ENCODE measurements at regions of chr7 and their contacts with region 1.

Region 1: GRCh38 chr7:55523366-55523765 is 48.9 kb downstream of the VOPP1 start:
- DNase-seq: no peak
- H3K4me3 ChIP-seq: no peak overlapping the region
- H3K27ac ChIP-seq: no peak overlapping the region
- H3K4me1 ChIP-seq: no peaks in the 10 kb centered on the region
- H3K27me3 ChIP-seq: no peaks in the 10 kb centered on the region
- CTCF ChIP-seq: no peak

Region 2: DNA sequence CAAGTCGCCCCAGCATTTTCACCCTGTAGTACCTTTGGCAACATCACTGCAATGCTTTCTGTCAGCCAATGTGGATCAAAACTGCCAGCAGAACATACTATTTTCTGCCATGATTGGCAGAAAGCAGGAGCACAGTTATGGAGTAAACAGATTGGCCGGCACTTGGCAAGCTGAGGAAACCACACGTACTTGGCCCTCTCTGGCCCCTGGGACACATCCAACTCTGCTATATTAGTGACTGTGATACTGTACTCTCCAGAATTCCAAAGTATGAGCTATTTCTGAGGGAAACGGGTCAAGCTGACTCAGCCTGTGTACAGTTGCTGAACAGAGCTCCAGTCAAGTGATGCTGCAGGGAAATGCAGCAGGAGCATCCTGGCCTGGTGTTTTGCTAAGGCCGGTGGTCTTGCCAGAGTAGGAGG is 198.0 kb before region 1 on chr7:
- CTCF ChIA-PET with region 1: no interaction called
- POLR2A ChIA-PET with region 1: no interaction called
- intact Hi-C with region 1: no loop called
- DNase-seq: peak in 1 of 2 experiments; percentile 49
- H3K4me3 ChIP-seq: no peak overlapping the region
- H3K27ac ChIP-seq: no peak overlapping the region
- H3K4me1 ChIP-seq: no peaks in the 10 kb centered on the region
- H3K27me3 ChIP-seq: peaks cover 81% of the 10 kb centered on the region
- CTCF ChIP-seq: no peak

Region 3: GRCh38 chr7:55588976-55589604 is 65.7 kb after region 1 on chr7:
- CTCF ChIA-PET with region 1: no interaction called
- POLR2A ChIA-PET with region 1: no interaction called
- intact Hi-C with region 1: no loop called
- DNase-seq: no peak
- H3K4me3 ChIP-seq: no peak overlapping the region
- H3K27ac ChIP-seq: no peak overlapping the region
- H3K4me1 ChIP-seq: peaks cover 4% of the 10 kb centered on the region
- H3K27me3 ChIP-seq: no peaks in the 10 kb centered on the region
- CTCF ChIP-seq: no peak

Region 4: DNA sequence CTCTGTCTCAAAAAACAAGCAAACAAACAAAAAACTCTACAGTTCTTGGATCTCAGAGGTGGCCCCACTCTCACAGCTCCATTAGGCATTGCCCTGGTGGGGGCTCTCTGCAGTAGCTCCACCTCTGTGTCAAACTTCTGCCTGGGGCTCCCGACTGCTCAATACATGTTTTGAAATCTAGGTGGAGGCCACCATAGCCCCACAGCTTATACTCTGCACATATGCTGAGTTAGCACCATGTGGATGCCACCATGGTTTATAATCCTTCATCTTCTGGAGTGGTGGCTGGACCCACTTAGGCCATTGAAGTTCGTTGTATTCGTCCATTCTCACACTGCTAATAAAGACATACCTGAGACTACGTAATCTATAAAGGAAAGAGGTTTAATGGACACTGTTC is 260.8 kb after region 1 on chr7:
- CTCF ChIA-PET with region 1: no interaction called
- POLR2A ChIA-PET with region 1: interaction called, 12 read pairs
- intact Hi-C with region 1: no loop called
- DNase-seq: no peak
- H3K4me3 ChIP-seq: no peak overlapping the region
- H3K27ac ChIP-seq: no peak overlapping the region
- H3K4me1 ChIP-seq: no peaks in the 10 kb centered on the region
- H3K27me3 ChIP-seq: no peaks in the 10 kb centered on the region
- CTCF ChIP-seq: no peak